Left colon (tissue), 2 donors: ENCODE measurements at regions of chr19 and their contacts with region 1.

Region 1: DNA sequence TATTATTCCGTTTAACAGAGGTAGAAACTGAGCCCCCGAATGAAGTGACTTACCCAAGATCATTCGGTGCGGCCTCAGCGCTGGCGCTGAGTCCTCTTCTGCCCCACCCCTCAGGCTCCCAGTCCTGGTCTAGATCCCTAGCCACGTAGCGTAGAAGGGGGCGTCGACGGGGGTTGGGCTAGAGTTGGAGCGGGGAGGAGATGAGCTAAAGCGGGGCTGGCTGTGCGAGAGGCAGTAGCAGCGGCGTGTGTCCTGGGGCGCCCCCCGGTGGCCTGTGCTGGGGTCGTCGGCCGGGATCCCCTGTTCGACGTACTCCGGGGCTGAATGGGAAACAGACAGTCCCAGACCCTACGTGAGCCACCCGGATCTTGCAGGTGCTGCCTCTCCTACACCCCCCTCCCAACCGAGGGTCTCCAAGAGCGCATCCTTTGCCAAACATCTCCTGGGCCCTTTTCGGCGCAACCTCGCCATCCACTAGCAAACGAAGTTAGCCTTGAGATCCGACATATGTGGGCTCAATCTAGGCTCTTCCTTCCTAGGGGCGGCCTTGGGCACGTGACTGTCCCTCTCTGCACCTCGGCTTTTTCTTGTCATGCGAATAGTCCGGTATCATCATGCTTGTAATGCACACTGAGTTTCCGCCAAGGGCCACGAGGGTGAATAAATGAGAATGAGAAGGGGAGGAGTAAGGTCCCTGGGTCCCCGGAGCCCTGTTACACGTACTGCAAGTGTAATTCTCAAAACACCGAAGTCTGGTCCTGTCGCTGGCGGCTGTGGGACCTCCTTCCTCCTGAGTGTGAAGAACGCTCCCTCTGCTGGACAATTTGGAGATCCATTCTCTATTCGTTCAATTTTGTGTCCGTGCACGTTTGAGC is 47.7 kb downstream of the CYP4F22 start:
- DNase-seq: peak; percentile 88 to 91
- ATAC-seq: peak; percentile 93

Region 2: DNA sequence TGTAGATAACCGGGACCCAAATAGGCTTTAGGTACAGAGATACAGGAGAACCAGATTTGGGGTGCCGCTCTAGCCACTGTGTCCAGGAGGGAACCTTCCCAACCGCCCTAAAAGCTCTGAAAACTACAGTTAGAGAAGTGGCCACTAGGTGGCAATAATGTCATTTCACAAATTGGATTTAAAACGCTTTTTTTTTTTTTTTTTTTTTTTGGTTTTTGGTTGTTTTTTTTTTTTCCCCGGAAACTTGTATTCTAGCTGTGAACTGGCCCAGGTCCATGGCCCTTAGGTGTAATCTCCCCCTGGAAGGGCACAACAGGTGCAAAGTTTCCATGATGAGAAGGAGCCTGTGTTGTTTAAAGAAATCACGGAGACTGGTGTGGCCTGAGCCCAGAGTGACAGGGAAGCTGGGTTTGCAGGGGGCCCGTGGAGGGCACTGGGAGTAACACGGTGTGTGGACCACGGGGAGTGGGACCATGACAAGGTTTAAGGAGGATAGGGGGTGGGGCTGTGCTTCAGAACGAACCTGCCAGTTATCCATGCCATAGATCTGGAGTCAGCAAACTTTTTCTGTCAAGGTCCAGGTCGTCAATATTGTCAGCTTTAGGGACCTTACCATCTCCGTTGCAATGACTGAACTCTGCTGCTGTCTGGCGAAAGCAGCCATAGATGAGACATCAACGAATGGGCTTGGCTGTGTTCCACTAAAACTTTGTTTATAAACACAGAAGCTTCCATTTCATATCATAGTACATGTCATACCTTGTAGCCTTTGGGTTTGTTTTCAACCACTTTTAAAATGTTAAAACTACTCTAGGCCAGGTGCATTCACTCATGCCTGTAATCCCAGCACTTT is 463.9 kb before region 1 on chr19:
- intact Hi-C with region 1: loop called (anchors 10 kb)
- DNase-seq: no peak
- ATAC-seq: peak; percentile 40

Region 3: GRCh38 chr19:15177269-15178116 is 378.5 kb before region 1 on chr19:
- intact Hi-C with region 1: loop called (anchors 5 to 10 kb)
- DNase-seq: peak; percentile 49 to 87
- ATAC-seq: peak; percentile 64

Region 4: DNA sequence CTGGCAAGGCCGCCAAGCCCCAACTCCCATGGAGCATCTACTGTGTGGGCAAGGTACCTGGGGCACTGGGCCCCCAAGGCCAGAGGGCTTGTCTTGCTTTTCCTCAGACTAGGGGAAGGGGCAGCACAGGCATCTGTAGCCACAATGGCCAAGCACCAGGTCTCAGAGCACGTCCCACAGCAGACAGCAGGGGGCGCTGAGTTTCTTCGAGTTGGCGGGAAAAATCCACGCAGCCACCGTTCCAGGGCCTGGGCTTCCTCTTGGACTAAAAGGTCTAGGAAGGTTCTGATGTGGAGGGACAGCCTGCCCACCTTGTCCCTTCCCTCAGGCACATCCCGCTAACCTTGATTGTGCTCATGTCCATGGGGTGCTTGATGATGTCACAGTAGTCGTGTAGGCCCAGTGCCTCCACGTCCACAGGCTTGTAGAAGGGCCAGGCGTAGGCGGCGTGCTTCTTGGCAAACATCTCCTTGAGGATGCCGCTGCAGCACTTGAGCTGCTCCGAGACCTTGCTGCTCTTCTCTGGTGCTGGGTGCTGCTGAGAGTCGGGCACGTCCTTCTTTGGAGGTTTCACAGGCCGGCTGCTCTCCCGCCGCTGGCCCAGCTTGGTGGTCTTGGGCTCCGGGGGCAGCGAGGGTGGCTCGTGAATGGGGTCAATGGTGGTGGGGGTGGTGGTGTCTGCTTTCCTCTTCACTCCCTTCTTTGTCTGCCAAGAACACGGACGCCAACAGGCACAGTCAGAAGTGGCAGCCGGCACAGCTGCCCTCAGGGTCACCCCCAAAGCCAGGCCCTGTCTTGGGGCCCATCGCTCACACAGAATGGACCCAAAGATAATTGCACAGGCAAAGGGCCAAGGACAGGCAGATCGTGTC is 291.7 kb before region 1 on chr19:
- intact Hi-C with region 1: loop called in 1 of 2 experiments (anchors 10 kb)
- DNase-seq: peak; percentile 53 to 83
- ATAC-seq: peak; percentile 58

Region 5: DNA sequence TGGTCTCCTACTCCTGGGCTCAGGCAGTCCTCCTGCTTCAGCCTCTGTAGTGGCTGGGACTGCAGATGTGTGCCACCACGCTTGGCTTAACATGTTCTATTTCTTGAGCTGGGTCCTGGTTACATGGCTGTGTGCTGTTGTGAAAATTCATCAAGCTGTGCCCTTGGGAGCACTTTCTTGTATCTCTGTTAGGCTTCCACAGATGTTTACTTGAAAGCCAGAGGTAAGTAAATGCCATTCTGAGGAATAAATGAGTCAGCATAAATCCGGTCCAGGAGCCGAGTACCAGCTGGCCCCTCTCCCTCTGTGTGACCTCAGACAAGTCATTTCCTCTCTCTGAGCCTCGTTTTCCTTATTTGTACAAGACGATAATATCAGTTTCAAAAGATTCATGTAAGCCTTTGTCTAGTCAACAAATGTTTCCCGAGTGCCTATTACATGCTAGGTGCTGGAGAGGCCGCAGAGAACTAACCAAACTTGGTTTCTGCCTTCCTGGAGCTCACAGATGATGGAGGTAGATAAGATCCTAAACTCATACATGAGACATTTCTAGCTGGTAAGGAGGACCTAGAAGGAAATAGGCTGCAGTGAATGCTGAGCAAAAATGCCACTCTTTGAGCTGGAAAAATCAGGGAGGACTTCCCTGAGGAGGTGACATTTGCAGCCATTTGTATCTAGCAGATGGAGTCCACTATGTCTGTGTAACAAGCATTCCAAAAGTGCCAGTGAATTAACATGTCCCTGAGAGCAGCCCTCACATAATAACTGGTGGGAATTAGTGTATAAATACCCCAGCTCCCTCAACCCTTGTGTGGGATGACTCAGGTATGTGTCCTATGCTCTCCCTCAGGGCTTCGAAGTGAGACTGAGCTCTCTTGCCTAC is 88.9 kb before region 1 on chr19:
- intact Hi-C with region 1: loop called in 1 of 2 experiments (anchors 10 kb)
- DNase-seq: peak in 1 of 2 donors; percentile 23
- ATAC-seq: no peak

Region 6: DNA sequence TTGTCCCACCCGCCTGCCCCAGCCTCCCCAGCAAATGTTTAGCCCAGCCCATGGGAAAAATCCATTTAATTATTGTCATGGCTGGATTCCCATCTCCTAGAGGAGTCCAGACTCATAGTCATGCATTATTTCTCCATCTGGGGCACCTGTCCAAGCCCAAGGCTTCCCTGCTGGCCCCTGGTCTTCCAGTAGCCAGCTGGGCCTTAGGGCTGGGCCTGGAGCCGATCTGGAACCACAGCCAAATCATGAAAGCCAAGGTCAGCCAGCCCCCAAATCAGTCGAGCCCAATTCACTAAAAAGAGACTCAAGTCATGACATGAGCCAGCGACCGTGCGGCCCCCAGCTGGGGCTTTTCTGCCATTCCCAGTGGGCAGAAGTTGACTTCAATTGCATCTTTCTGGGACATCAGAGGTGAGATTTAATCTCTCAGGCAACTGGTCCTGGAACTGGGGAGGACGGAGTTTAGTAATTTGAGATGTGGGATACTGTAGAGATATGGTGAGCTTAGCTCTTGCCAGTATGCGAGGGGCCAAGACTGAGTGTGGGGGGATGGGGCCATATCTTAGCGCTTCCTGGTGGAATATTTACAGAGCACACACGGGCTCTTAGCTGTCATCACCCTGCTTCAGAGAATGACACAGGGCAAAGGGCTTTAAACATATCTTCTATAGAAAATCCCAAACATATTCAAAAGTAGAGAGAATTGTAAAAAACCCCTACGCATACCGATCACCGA is 67.3 kb before region 1 on chr19:
- intact Hi-C with region 1: no loop called
- DNase-seq: no peak
- ATAC-seq: no peak